GM12878 (cell line): ENCODE measurements at regions of chr10 and their contacts with region 1.

Region 1: DNA sequence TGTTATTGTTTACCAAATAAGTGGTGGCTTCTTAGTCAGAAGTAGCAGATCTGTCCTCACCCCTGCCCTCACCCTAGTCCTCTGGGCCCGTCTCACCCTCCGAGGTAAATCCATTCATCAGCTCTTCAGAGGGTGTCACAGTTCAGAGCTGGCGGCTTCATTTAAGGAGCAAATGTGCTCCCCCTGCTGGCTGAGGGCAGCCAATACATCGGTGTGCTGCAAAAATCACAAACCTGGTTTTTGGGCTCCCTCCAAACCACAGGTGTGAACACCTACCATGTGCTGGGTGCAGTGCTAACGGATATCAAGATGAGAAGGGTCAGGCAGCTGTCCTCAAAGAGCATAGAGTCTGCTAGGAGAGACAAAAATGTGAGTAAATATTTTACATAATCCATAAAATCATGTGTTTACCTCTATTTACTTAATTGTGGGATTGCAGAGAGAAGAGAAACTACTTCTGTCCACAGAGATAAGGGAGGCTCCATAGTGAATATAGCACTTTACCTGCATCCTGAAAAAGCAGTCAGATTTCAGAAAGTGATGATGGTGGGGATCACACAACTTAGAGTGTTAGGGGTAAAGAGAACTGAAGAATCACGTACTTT is 15.5 kb upstream of the CRTAC1 start:
- DNase-seq: no peak
- ATAC-seq: peak; percentile 90
- H3K4me3 ChIP-seq: no peak overlapping the region
- H3K27ac ChIP-seq: no peak overlapping the region
- H3K4me1 ChIP-seq: no peaks in the 10 kb centered on the region
- H3K27me3 ChIP-seq: peaks cover 2 to 5% of the 10 kb centered on the region in 2 experiments; a peak in 2 of 4 replicates
- CTCF ChIP-seq: peak; percentile 69 to 91 (median 86)
- EP300 ChIP-seq: no peak
- POLR2A ChIP-seq: no peak
- RAD21 ChIP-seq: peak; percentile 27; the same call in 1 of the 2 replicates

Region 2: DNA sequence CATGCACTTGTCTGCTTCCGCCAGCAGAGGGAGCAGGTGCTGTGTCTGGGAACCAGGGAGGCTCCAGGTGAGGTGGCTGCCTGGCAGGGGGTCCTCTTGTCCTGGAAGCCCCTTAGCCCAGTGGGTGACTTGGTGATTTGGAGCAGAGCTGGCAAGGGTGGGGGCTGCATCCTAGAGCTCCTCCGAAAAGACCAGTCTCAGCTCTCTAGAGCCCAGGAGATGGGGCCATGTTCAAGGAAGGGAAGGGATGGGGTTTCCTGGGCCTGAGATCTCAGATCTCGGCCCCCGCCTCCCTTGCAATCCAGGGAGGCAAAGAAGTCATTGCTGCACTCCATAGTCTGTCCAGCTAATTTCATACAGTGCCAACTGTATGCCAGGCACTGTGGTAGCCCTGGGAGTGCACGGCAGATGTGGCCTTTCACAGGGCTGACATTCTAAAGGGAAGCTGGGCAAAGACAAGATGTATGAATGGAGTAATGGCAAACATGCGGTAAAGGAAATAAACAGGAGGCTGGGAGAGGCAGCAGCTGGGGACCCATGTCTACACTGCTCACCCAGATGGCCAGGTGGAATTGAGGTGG is 253.7 kb before region 1 on chr10:
- CTCF ChIA-PET with region 1: interaction called, 6 read pairs
- POLR2A ChIA-PET with region 1: no interaction called
- RAD21 ChIA-PET with region 1: no interaction called
- SMC1A ChIA-PET with region 1: no interaction called
- in situ Hi-C with region 1: no loop called
- intact Hi-C with region 1: loop called (anchors 5 kb)
- DNase-seq: no peak
- ATAC-seq: peak; percentile 95; the same call in 2 of the 3 replicates
- H3K4me3 ChIP-seq: no peak overlapping the region
- H3K27ac ChIP-seq: no peak overlapping the region
- H3K4me1 ChIP-seq: no peaks in the 10 kb centered on the region
- H3K27me3 ChIP-seq: peaks cover 0 to 3% of the 10 kb centered on the region in 2 experiments; a peak in 1 of 4 replicates
- CTCF ChIP-seq: peak; percentile 83 to 95 (median 93)
- EP300 ChIP-seq: no peak
- POLR2A ChIP-seq: no peak
- RAD21 ChIP-seq: peak; percentile 72

Region 3: DNA sequence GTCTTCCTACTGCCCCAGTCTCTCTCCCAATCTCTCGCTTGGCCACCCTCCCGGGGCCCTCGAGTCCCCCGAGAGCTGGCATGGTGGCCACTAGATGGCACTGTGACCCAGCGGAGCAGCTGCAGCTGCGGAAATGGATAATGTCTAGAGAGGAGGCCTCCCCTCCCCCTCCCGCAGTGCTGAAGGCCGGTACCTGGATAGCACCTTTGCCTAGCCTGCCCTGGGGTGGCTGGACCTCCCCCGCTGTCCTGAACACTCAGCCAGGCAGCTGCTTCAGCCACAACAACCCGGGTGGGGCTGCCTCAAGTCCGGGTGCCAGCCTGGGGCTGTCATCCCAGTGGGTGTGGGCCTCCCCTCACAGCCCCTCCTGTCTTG is 131.1 kb before region 1 on chr10:
- CTCF ChIA-PET with region 1: interaction called, 143 read pairs
- POLR2A ChIA-PET with region 1: no interaction called
- RAD21 ChIA-PET with region 1: interaction called, 44 read pairs
- SMC1A ChIA-PET with region 1: interaction called, 25 read pairs
- in situ Hi-C with region 1: loop called (anchors 5 kb)
- intact Hi-C with region 1: loop called (anchors 1 kb)
- DNase-seq: no peak
- ATAC-seq: peak; percentile 99
- H3K4me3 ChIP-seq: no peak overlapping the region
- H3K27ac ChIP-seq: no peak overlapping the region
- H3K4me1 ChIP-seq: no peaks in the 10 kb centered on the region
- H3K27me3 ChIP-seq: peaks cover 0 to 2% of the 10 kb centered on the region in 2 experiments; a peak in 1 of 4 replicates
- CTCF ChIP-seq: peak; percentile 83 to 86 (median 84)
- EP300 ChIP-seq: no peak
- POLR2A ChIP-seq: no peak
- RAD21 ChIP-seq: peak; percentile 90

Region 4: GRCh38 chr10:98028168-98028770 is 17.6 kb before region 1 on chr10:
- CTCF ChIA-PET with region 1: interaction called, 29 read pairs
- POLR2A ChIA-PET with region 1: no interaction called
- RAD21 ChIA-PET with region 1: interaction called, 6 read pairs
- SMC1A ChIA-PET with region 1: interaction called, 8 read pairs
- in situ Hi-C with region 1: no loop called
- intact Hi-C with region 1: no loop called
- DNase-seq: no peak
- ATAC-seq: peak; percentile 88
- H3K4me3 ChIP-seq: no peak overlapping the region
- H3K27ac ChIP-seq: no peak overlapping the region
- H3K4me1 ChIP-seq: no peaks in the 10 kb centered on the region
- H3K27me3 ChIP-seq: peaks cover 6% of the 10 kb centered on the region in 2 experiments
- CTCF ChIP-seq: peak; percentile 76 to 86 (median 82)
- EP300 ChIP-seq: no peak
- POLR2A ChIP-seq: no peak
- RAD21 ChIP-seq: peak; percentile 37

Region 5: DNA sequence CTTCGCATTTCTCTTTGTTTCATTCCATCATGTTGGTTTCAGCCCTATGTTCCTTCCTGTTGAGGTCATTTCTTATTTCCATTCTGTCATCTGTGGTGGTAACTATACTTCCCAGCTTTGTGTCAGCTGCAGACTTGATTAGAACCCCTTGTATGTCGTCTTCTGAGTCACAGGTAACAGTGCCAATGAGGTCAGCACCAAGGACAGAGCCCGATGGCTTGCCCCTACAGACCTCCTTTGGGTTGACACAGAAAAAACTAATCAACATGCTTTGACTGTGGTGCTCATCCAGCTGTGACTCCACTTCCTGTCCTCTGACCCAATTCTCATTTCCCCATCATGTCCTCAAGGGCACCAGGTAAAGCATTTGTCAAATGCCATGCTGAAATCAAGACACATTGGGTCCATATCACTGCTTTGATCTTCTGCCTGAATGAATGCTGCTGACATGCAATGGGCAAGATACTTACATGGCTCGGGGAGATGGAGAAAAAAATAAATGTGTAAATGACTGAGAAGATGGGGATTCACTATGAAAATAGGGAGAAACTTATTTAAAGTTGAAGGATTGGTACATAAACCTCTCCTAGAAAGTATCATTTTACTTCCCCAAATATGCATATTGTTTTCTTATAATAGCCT is 10.1 kb after region 1 on chr10:
- CTCF ChIA-PET with region 1: interaction called, 31 read pairs
- POLR2A ChIA-PET with region 1: no interaction called
- RAD21 ChIA-PET with region 1: no interaction called
- SMC1A ChIA-PET with region 1: interaction called, 4 read pairs
- in situ Hi-C with region 1: no loop called
- intact Hi-C with region 1: no loop called
- DNase-seq: no peak
- ATAC-seq: peak; percentile 82
- H3K4me3 ChIP-seq: no peak overlapping the region
- H3K27ac ChIP-seq: no peak overlapping the region
- H3K4me1 ChIP-seq: no peaks in the 10 kb centered on the region
- H3K27me3 ChIP-seq: peaks cover 0 to 1% of the 10 kb centered on the region in 2 experiments; a peak in 2 of 4 replicates
- CTCF ChIP-seq: no peak
- EP300 ChIP-seq: no peak
- POLR2A ChIP-seq: no peak
- RAD21 ChIP-seq: no peak

Region 6: DNA sequence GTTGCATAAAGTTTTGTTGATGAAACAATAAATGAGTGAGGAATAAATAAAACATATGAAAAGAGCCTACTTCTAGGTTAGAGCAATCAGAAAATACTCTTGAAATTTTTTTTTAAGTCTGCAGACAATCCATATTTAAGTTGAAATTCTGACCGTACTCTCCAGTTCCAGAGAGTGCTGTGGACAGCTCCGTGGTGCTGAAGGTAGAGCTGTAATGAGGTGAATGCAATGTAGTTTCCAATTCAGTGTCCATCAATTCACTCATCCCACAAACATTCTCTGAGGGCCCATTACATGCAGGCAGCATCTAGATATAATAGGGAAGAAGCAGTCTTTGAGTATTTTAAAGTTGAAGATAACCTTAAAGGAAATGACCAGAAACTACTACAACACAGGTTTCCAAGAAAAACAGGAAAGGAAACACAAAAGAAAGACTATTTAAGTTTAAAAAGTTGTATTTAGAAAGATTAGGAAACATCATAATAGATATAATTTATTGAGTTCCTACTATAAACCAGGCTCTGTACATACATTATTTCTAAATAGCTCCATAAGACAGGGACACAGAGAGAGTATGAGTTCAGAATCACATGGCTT is 28.5 kb after region 1 on chr10:
- CTCF ChIA-PET with region 1: interaction called, 12 read pairs
- POLR2A ChIA-PET with region 1: no interaction called
- RAD21 ChIA-PET with region 1: no interaction called
- SMC1A ChIA-PET with region 1: interaction called, 3 read pairs
- in situ Hi-C with region 1: no loop called
- intact Hi-C with region 1: no loop called
- DNase-seq: no peak
- ATAC-seq: no peak
- H3K4me3 ChIP-seq: no peak overlapping the region
- H3K27ac ChIP-seq: no peak overlapping the region
- H3K4me1 ChIP-seq: no peaks in the 10 kb centered on the region
- H3K27me3 ChIP-seq: no peaks in the 10 kb centered on the region
- CTCF ChIP-seq: no peak
- EP300 ChIP-seq: no peak
- POLR2A ChIP-seq: no peak
- RAD21 ChIP-seq: no peak